ENCODE measurements at regions of chr3 and their contacts with region 1.

Region 1: GRCh38 chr3:112814266-112814665 is 32.4 kb downstream of the CD200R1L start:
- DNase-seq: peak in 2 of 42 donors; percentile 8 to 15

Region 2: GRCh38 chr3:112635671-112636070 is 178.6 kb before region 1 on chr3:
- intact Hi-C with region 1: loop called (anchors 5 kb)
- DNase-seq: no peak